Activated T-helper 2 cell treated with anti-CD3 and anti-CD28 coated beads, Interferon-gamma antibody, Interleukin-2, Interleukin-4, amounts not matched to agents 10 μg/mL and 5 μg/mL and 100 μg/mL, durations not matched to agents 14 hours and 24 hours and 36 hours (primary cell): ENCODE measurements at regions of chr4 and their contacts with region 1.

Region 1: DNA sequence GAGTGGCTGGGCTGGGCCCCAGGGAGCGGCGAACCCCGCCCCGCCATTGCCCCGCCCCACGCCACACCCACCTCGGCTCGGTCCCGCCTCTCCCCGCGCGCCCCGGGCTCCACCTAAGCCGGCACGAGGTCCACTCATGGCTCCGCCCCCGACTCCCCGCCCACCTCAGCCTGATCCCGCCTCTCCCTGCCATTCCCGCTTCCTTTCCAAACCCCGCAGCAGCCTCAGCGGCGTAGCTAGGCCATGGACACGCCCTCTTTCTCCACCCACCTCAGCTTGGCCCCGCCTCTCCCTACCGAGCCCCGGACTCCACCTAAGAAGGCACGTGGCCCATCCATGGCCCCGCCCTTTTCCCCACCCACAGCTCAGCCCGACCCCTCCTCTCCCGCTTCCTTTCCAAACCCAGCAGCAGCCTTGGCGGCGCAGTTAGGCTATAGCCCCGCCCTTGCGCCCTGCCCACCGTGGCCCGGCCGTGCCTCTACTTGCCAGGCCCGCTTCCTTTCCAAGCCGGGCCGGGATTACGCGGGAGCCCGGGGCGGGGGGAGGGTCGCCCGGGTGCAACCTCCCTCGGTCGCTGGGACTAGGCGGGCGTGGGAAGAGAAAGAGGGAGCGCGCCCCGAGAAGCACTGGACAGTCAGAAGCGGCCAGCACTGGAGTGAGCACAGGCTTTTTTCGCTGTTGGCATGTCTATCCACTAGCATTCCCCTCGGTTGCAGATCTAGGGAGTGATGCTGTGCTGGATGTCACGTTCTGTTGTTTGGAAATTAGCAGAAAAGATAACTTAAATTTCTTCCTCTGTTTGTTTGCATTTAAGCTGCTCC is at the start of gene RELL1:
- DNase-seq: peak; percentile 99
- H3K4me3 Mint-ChIP-seq: peak within 1 kb of the TSS; percentile 92
- H3K27ac Mint-ChIP-seq: peak within 1 kb of the TSS; percentile 97
- H3K4me1 Mint-ChIP-seq: peaks cover 34% of the 10 kb centered on the region
- H3K27me3 Mint-ChIP-seq: peaks cover 11% of the 10 kb centered on the region
- total RNA-seq, gene RELL1: 19.3 and 22.2 TPM in 2 replicates

Region 2: GRCh38 chr4:37365888-37366287 is 320.7 kb before region 1 on chr4:
- intact Hi-C with region 1: no loop called
- DNase-seq: no peak
- H3K4me3 Mint-ChIP-seq: no peak overlapping the region
- H3K27ac Mint-ChIP-seq: no peak overlapping the region
- H3K4me1 Mint-ChIP-seq: no peaks in the 10 kb centered on the region
- H3K27me3 Mint-ChIP-seq: peaks cover 7% of the 10 kb centered on the region

Region 3: DNA sequence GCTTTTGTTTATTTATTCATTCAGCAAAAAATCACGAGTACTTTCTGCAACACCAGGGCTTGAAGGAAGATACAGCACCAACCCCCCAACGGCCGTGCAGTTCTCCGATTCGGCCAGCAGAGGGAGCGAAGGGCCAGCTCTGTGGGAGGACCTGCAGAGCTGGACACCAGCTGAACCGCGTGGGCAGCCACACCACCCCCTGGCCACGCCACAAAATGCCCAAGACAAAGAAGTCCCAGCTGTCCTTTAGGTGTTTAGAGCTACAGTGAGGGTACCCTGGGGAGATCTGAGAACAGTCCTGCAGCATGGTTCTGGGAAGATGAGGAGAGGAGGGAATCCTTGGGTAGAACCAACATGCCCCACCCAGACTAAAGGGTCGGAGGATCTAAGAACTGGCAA is 83.5 kb before region 1 on chr4:
- intact Hi-C with region 1: loop called (anchors 1 kb)
- DNase-seq: peak; percentile 61
- H3K4me3 Mint-ChIP-seq: no peak overlapping the region
- H3K27ac Mint-ChIP-seq: peak overlapping the region; percentile 76
- H3K4me1 Mint-ChIP-seq: peaks cover 37% of the 10 kb centered on the region
- H3K27me3 Mint-ChIP-seq: no peaks in the 10 kb centered on the region

Region 4: GRCh38 chr4:37666625-37667071 is 19.9 kb before region 1 on chr4:
- intact Hi-C with region 1: loop called (anchors 2 kb)
- DNase-seq: no peak
- H3K4me3 Mint-ChIP-seq: peak overlapping the region; percentile 19
- H3K27ac Mint-ChIP-seq: peak overlapping the region; percentile 61
- H3K4me1 Mint-ChIP-seq: peaks cover 44% of the 10 kb centered on the region
- H3K27me3 Mint-ChIP-seq: no peaks in the 10 kb centered on the region

Region 5: GRCh38 chr4:37715889-37716402 is 29.4 kb after region 1 on chr4:
- intact Hi-C with region 1: loop called (anchors 1 kb)
- DNase-seq: peak; percentile 11
- H3K4me3 Mint-ChIP-seq: no peak overlapping the region
- H3K27ac Mint-ChIP-seq: no peak overlapping the region
- H3K4me1 Mint-ChIP-seq: peaks cover 28% of the 10 kb centered on the region
- H3K27me3 Mint-ChIP-seq: peaks cover 37% of the 10 kb centered on the region

Region 6: DNA sequence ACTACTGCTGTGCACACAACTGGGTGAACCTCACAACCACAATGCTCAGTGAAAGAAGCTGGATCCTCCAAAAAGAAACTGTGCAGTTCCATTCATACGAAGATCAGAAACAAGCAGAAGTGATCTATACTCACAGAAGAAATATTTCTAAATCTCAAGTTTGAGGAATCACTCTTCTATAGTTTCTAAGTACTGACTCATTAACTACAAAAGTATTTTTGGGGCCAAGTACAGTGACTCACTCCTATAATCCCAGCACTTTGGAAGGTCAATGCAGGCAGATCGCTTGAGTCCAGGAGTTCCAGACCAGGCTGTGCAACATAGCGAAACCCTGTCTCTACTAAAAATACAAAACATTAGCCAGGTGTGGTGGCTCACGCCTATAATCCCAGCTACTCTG is 50.9 kb after region 1 on chr4:
- intact Hi-C with region 1: no loop called
- DNase-seq: no peak
- H3K4me3 Mint-ChIP-seq: no peak overlapping the region
- H3K27ac Mint-ChIP-seq: no peak overlapping the region
- H3K4me1 Mint-ChIP-seq: peaks cover 2% of the 10 kb centered on the region
- H3K27me3 Mint-ChIP-seq: peaks cover 8% of the 10 kb centered on the region

Region 7: GRCh38 chr4:37826295-37827029 is 139.9 kb after region 1 on chr4 and contains the start of gene PGM2:
- intact Hi-C with region 1: loop called (anchors 1 kb)
- DNase-seq: peak; percentile 88
- H3K4me3 Mint-ChIP-seq: peak within 1 kb of the TSS; percentile 91
- H3K27ac Mint-ChIP-seq: peak within 1 kb of the TSS; percentile 87
- H3K4me1 Mint-ChIP-seq: peaks cover 43% of the 10 kb centered on the region
- H3K27me3 Mint-ChIP-seq: peaks cover 5% of the 10 kb centered on the region
- total RNA-seq, gene PGM2: 49.3 and 52.5 TPM in 2 replicates

Region 8: GRCh38 chr4:37977471-37978247 is 291.1 kb after region 1 on chr4:
- intact Hi-C with region 1: loop called (anchors 10 kb)
- DNase-seq: peak; percentile 71
- H3K4me3 Mint-ChIP-seq: peak overlapping the region; percentile 81
- H3K27ac Mint-ChIP-seq: peak overlapping the region; percentile 78
- H3K4me1 Mint-ChIP-seq: peaks cover 28% of the 10 kb centered on the region
- H3K27me3 Mint-ChIP-seq: no peaks in the 10 kb centered on the region

Region 9: DNA sequence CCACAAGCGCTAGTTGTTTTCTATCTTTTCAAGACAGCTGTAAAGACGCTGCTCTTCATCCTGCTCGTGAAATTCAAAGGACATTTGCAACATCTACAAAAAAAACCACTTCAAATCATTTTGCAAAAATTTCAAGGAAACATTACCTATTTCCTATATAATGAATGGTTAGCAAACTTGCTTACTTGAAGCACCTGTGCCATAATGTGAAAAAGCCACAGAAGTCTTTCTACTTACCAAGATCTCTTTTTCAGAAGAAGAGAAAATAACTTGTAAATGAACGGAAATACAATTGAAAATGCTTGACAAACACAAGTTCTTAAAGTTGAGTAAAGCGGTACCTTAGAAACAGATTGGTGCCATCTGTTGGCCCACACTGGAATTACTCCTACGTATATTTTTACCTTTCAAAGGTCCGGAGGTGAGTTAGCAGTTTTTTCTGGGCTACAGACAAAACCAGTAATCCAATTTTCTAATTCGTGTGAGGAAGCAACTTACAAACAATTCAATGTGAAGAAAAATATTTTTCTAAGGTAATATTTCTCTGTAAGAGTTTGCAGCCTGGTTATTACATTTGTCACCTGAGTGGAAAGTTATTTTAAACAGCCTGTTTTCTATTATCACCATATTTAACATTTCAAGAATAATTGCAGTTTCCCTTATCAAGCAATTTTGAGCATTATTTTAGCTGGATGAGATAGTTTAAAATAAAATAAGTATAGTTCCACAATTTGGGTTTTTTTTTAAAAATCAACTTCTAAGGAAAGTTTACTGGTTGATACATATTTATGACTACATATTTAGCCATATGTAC is 1170.1 kb after region 1 on chr4 and contains the start of gene TLR6:
- intact Hi-C with region 1: loop called (anchors 10 kb)
- DNase-seq: peak; percentile 47
- H3K4me3 Mint-ChIP-seq: peak within 1 kb of the TSS; percentile 73
- H3K27ac Mint-ChIP-seq: peak within 1 kb of the TSS; percentile 78
- H3K4me1 Mint-ChIP-seq: peaks cover 26% of the 10 kb centered on the region
- H3K27me3 Mint-ChIP-seq: peaks cover 5% of the 10 kb centered on the region
- total RNA-seq, gene TLR6: 0.37 and 0.48 TPM in 2 replicates